SK-N-SH (cell line): ENCODE measurements at regions of chr1 and their contacts with region 1.

Region 1: GRCh38 chr1:212035123-212035834 is at the starts of genes DTL and INTS7:
- DNase-seq: peak; percentile 94
- H3K4me3 ChIP-seq: peak within 1 kb of the TSS; percentile 89 to 99
- H3K27ac ChIP-seq: peak within 1 kb of the TSS; percentile 81 to 93
- H3K4me1 ChIP-seq: peaks cover 18 to 22% of the 10 kb centered on the region in 2 experiments; a peak in 3 of 4 replicates
- H3K27me3 ChIP-seq: no peaks in the 10 kb centered on the region
- CTCF ChIP-seq: peak; percentile 92
- EP300 ChIP-seq: peak in 1 of 2 experiments; percentile 27; a peak in 1 of 4 replicates
- RAD21 ChIP-seq: no peak
- polyA plus RNA-seq, gene DTL: 9.3 and 12.6 TPM in 2 replicates
- polyA plus RNA-seq, gene INTS7: 8.7 and 11.7 TPM in 2 replicates

Region 2: DNA sequence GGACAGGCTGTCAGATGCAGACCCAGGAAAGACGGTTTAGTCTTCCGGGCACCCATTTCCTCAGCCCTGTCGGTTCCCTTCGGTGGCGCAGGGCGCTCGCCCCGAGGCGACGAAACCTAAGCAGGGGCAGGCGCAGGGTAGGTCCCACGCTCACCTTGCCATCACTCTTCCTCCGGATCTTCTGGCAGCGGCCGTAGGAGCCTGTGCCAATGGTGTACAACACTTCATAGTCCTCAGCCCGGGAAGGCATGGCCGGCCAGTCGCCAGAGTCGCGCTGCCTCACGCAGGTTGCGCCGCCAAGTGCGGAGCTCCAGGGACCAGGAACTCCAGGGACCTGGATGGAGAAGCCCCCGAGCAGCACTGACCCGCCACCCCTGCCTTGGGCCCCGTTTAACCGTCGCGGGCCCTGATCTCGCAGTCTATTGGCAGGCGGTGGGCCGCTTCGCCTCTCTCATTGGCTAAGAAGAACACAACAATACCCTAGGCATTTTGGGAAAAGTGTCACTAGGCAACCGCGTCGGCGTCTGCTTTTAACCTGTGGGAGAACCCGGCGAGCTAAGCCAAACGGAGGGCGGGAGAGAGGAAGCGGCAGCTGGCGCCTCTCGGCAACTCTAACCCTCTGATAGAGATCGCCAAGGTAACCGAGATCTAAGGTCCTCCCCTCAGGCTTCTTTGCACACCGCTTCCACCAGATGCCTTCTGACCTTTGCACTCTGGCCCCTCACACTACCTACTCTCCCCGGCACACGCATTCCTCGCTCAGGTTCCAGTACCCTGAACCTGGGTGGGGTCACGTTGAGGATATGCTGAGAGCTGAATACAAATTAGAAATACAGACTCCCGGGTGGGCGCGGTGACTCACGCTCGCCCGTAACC is 359.8 kb before region 1 on chr1 and contains the start of gene NEK2:
- CTCF ChIA-PET with region 1: interaction called, 85 read pairs
- POLR2A ChIA-PET with region 1: interaction called, 5 read pairs
- DNase-seq: peak; percentile 89
- H3K4me3 ChIP-seq: peak within 1 kb of the TSS; percentile 78 to 85
- H3K27ac ChIP-seq: no peak within 1 kb of the TSS; a peak in 2 of 4 replicates
- H3K4me1 ChIP-seq: peaks cover 0 to 10% of the 10 kb centered on the region in 2 experiments; a peak in 2 of 4 replicates
- H3K27me3 ChIP-seq: no peaks in the 10 kb centered on the region
- CTCF ChIP-seq: no peak
- EP300 ChIP-seq: no peak; a peak in 1 of 4 replicates
- RAD21 ChIP-seq: no peak
- polyA plus RNA-seq, gene NEK2: 8.2 and 9.4 TPM in 2 replicates

Region 3: GRCh38 chr1:211698161-211699026 is 336.9 kb before region 1 on chr1:
- CTCF ChIA-PET with region 1: interaction called, 40 read pairs
- POLR2A ChIA-PET with region 1: no interaction called
- DNase-seq: peak; percentile 86
- H3K4me3 ChIP-seq: no peak overlapping the region; a peak in 1 of 4 replicates
- H3K27ac ChIP-seq: no peak overlapping the region
- H3K4me1 ChIP-seq: no peaks in the 10 kb centered on the region
- H3K27me3 ChIP-seq: no peaks in the 10 kb centered on the region
- CTCF ChIP-seq: peak; percentile 95
- EP300 ChIP-seq: no peak
- RAD21 ChIP-seq: peak; percentile 89

Region 4: GRCh38 chr1:212012034-212012740 is 23.1 kb before region 1 on chr1:
- CTCF ChIA-PET with region 1: interaction called, 46 read pairs
- POLR2A ChIA-PET with region 1: interaction called, 3 read pairs
- DNase-seq: peak; percentile 85
- H3K4me3 ChIP-seq: no peak overlapping the region; a peak in 1 of 4 replicates
- H3K27ac ChIP-seq: no peak overlapping the region
- H3K4me1 ChIP-seq: no peaks in the 10 kb centered on the region
- H3K27me3 ChIP-seq: no peaks in the 10 kb centered on the region
- CTCF ChIP-seq: peak; percentile 98
- EP300 ChIP-seq: no peak
- RAD21 ChIP-seq: peak; percentile 87

Region 5: DNA sequence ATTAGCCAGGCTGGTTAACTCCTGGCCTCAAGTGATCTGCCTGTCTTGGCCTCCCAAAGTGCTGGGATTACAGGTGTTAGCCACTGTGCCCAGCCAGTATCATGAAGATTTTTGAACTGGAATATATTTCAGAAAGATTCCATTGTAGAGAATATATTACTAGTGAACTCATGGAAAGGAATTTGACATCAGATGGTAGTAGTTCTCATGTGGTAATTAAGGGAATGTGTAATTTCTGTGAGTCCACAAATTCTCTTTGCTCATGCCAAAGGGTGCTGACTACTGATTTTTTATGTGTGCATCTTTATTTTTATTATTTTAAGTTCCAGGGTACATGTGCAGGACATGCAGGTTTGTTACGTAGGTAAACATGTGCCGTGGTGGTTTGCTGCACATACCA is 10.7 kb after region 1 on chr1:
- CTCF ChIA-PET with region 1: interaction called, 24 read pairs
- POLR2A ChIA-PET with region 1: interaction called, 4 read pairs
- DNase-seq: no peak
- H3K4me3 ChIP-seq: no peak overlapping the region
- H3K27ac ChIP-seq: no peak overlapping the region
- H3K4me1 ChIP-seq: no peaks in the 10 kb centered on the region; a peak in 1 of 4 replicates
- H3K27me3 ChIP-seq: no peaks in the 10 kb centered on the region
- CTCF ChIP-seq: no peak
- EP300 ChIP-seq: no peak
- RAD21 ChIP-seq: no peak